ENCODE measurements at regions of chr16 and their contacts with region 1.

Region 1: DNA sequence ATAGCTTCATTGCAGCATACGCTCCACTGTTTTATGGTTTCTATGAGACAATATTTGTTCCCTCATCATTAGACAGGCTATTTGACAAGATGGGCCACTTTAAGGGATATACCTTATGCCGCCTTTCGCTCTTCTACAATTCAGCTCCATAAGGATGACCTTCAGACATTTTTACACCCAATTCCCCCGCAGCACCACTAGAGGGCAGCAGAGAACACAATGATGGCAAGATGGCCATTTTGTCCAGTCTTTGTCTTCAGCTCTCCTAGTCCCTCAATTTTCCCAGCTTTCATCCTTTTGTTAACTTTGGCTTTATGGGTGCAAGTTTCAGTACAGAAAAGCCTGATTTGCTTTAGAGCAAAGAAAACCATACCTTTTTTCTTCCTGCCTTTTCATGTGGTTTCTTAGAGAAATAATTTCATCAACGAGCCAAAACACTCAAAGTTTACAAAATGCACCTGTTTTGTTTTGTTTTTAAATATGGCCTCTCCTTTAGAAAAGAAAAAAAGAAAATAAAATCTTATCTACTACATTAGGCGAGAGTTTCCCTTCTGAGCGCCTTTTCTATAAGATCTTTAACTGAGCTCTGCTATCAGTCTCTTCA is 355.3 kb downstream of the TOX3 start:
- DNase-seq: peak; percentile 67
- H3K4me3 Mint-ChIP-seq: no peak overlapping the region
- H3K27ac Mint-ChIP-seq: no peak overlapping the region
- H3K4me1 Mint-ChIP-seq: no peaks in the 10 kb centered on the region
- H3K27me3 Mint-ChIP-seq: no peaks in the 10 kb centered on the region

Region 2: GRCh38 chr16:52912565-52913173 is 721.0 kb after region 1 on chr16:
- CTCF ChIA-PET with region 1: interaction called, 5 read pairs
- intact Hi-C with region 1: loop called (anchors 1 kb)
- DNase-seq: peak; percentile 68
- H3K4me3 Mint-ChIP-seq: no peak overlapping the region
- H3K27ac Mint-ChIP-seq: no peak overlapping the region
- H3K4me1 Mint-ChIP-seq: no peaks in the 10 kb centered on the region
- H3K27me3 Mint-ChIP-seq: no peaks in the 10 kb centered on the region

Region 3: GRCh38 chr16:53022374-53022773 is 830.7 kb after region 1 on chr16:
- CTCF ChIA-PET with region 1: no interaction called
- intact Hi-C with region 1: loop called (anchors 1 kb)
- DNase-seq: peak; percentile 27
- H3K4me3 Mint-ChIP-seq: no peak overlapping the region
- H3K27ac Mint-ChIP-seq: no peak overlapping the region
- H3K4me1 Mint-ChIP-seq: no peaks in the 10 kb centered on the region
- H3K27me3 Mint-ChIP-seq: peaks cover 6% of the 10 kb centered on the region

Region 4: DNA sequence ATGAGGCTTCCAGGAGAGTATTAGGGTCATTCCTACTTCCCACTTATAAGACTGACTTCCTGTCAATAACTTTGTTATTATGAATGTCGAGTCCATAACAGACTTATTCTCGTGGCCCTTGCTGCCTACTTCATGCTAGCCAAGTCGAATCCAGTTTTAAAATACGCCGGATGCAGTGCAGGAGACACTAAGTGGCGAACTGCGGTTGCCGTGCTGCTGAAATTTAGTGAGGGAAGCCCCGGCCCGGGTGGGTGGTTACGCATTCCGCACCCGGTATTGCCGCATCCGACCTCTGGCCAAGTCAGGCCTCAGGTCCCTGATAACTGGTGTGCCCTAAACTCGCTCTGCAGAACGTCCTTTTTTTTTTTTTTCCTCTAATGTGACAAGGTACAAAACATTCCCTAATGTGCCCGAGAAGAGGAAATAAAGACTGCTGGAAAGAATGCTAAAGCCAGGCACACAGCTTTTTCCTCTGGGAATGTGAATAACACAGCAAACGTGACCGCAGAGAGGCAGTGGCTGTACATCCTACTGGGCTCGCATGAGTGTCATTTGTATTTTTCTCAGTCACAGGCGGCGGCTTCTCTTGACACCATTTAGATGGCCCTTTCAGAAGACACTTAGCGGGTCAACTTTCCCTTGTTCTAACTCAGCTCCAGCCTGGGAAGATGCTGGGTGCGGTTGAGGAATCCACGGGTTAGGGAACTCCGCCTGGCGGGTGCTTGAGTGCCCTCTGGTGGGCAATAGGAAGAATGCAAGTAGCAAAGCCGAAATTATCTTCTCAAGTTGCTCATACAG is 1318.5 kb after region 1 on chr16:
- CTCF ChIA-PET with region 1: no interaction called
- intact Hi-C with region 1: loop called (anchors 5 kb)
- DNase-seq: peak; percentile 55
- H3K4me3 Mint-ChIP-seq: peak overlapping the region; percentile 10
- H3K27ac Mint-ChIP-seq: no peak overlapping the region
- H3K4me1 Mint-ChIP-seq: peaks cover 18% of the 10 kb centered on the region
- H3K27me3 Mint-ChIP-seq: no peaks in the 10 kb centered on the region